ENCODE measurements at regions of chr19 and their contacts with region 1.

Region 1: DNA sequence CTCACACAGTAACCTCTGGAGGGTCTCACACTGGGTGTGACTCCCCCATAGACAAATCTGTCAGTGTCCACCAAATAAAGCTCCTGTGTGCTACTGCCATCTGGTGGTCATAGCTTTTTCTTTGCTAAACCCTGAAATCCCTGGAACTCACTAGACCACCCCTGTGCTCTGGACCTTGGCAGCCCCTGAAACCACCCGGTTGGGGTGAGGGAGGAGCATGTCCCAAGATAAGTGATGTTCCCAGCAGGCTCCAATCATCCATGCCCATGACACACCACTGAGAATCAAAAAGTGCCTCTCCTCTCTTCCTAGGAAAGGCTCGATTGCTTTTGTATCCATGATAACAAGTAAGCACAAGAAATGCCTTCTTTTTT is 6.5 kb upstream of the HSD17B14 start:
- DNase-seq: peak; percentile 67 to 76
- H3K4me3 ChIP-seq: no peak overlapping the region
- H3K4me3 Mint-ChIP-seq: no peak overlapping the region
- H3K27ac Mint-ChIP-seq: peak overlapping the region; percentile 14
- H3K4me1 ChIP-seq: peaks cover 4% of the 10 kb centered on the region; the same call in 1 of the 2 replicates
- H3K4me1 Mint-ChIP-seq: peaks cover 7% of the 10 kb centered on the region
- H3K27me3 ChIP-seq: no peaks in the 10 kb centered on the region
- H3K27me3 Mint-ChIP-seq: no peaks in the 10 kb centered on the region
- CTCF ChIP-seq: peak; percentile 86 to 94

Region 2: DNA sequence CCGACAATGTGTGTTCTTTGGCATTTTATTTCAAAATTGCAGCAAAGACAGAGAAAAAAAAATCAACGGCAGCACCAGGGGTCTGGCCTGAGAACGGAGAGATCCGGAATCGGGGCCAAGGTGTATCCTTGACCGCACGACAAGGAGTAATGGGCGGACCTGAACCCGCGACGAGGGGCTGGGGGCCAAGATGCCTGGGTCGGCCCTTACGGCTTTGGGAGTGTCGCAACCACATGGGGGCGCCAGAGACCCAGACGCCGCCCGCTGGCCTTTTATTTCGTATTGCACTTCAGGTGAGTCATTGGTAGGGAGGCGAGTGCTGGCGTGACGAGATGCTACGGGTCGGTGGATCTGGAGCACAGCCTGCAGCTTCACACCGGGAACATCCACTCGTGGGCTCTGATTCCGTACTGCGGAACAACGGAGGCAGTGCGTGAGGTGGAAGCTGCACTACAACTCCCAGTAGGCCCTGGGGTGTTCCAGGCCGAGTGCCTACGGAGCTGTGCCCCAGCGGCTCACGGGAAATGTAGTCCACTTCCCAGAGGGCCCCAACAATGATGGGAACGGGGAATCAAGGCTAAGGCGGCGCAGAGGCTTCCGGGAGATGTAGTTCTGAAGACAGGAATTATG is 47.6 kb before region 1 on chr19:
- CTCF ChIA-PET with region 1: interaction called, 44 read pairs
- POLR2A ChIA-PET with region 1: no interaction called
- intact Hi-C with region 1: no loop called
- DNase-seq: peak; percentile 95
- H3K4me3 ChIP-seq: peak overlapping the region; percentile 55
- H3K4me3 Mint-ChIP-seq: peak overlapping the region; percentile 83
- H3K27ac Mint-ChIP-seq: peak overlapping the region; percentile 79
- H3K4me1 ChIP-seq: peaks cover 8% of the 10 kb centered on the region
- H3K4me1 Mint-ChIP-seq: peaks cover 13% of the 10 kb centered on the region
- H3K27me3 ChIP-seq: no peaks in the 10 kb centered on the region
- H3K27me3 Mint-ChIP-seq: no peaks in the 10 kb centered on the region
- CTCF ChIP-seq: peak; percentile 94 to 95

Region 3: DNA sequence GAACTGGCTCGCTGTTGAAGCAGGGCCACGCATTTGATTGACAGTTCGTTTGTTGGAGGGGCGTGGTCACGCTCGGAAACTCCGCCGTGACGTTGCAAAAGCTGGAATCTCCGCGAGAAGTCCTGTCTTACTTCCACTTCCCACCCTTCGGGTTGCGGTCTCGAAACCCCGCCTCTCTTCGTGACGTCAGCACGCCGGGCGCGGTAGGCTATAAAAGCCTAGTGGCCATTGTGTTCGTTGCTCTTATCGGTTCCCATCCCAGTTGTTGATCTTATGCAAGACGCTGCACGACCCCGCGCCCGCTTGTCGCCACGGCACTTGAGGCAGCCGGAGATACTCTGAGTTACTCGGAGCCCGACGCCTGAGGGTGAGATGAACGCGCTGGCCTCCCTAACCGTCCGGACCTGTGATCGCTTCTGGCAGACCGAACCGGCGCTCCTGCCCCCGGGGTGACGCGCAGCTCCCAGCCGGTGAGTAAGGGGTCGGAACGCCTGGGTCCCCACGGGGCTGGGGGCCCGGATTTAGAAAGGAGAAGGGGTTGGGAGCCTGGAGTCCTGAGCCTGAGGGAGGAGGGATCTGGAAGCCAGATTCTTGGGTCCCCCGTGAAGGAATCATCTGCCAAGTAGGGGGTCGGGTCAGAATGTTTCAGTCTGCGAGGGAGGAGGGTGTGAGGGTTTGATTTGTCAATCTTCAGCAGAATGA is 29.6 kb after region 1 on chr19 and contains the start of gene PPP1R15A:
- CTCF ChIA-PET with region 1: interaction called, 10 read pairs
- POLR2A ChIA-PET with region 1: interaction called, 5 read pairs
- intact Hi-C with region 1: no loop called
- DNase-seq: peak; percentile 99
- H3K4me3 ChIP-seq: peak within 1 kb of the TSS; percentile 99
- H3K4me3 Mint-ChIP-seq: peak within 1 kb of the TSS; percentile 99
- H3K27ac Mint-ChIP-seq: peak within 1 kb of the TSS; percentile 100
- H3K4me1 ChIP-seq: peaks cover 56% of the 10 kb centered on the region
- H3K4me1 Mint-ChIP-seq: peaks cover 49% of the 10 kb centered on the region
- H3K27me3 ChIP-seq: no peaks in the 10 kb centered on the region
- H3K27me3 Mint-ChIP-seq: peaks cover 3% of the 10 kb centered on the region
- CTCF ChIP-seq: no peak
- total RNA-seq, gene PPP1R15A: 83.3 and 94.7 TPM in 2 replicates

Region 4: GRCh38 chr19:48965040-48965805 is 122.4 kb after region 1 on chr19 and contains the start of gene FTL:
- CTCF ChIA-PET with region 1: interaction called, 16 read pairs
- POLR2A ChIA-PET with region 1: interaction called, 7 read pairs
- intact Hi-C with region 1: loop called (anchors 5 kb)
- DNase-seq: peak; percentile 99
- H3K4me3 ChIP-seq: peak within 1 kb of the TSS; percentile 95
- H3K4me3 Mint-ChIP-seq: peak within 1 kb of the TSS; percentile 96
- H3K27ac Mint-ChIP-seq: peak within 1 kb of the TSS; percentile 96
- H3K4me1 ChIP-seq: peaks cover 31% of the 10 kb centered on the region
- H3K4me1 Mint-ChIP-seq: peaks cover 40% of the 10 kb centered on the region
- H3K27me3 ChIP-seq: no peaks in the 10 kb centered on the region
- H3K27me3 Mint-ChIP-seq: no peaks in the 10 kb centered on the region
- CTCF ChIP-seq: no peak
- total RNA-seq, gene FTL: 2,542 and 2,963 TPM in 2 replicates

Measured in Caco-2 (cell line).